Heart right ventricle (tissue), 16 donors: ENCODE measurements at regions of chr3 and their contacts with region 1.

Region 1: GRCh38 chr3:119380697-119381096 is 82.7 kb downstream of the TMEM39A start:
- DNase-seq: no peak
- ATAC-seq: peak in 3 of 8 donors; percentile 28 to 45 (median 31)
- H3K4me3 ChIP-seq: no peak overlapping the region
- H3K27ac ChIP-seq: no peak overlapping the region
- H3K4me1 ChIP-seq: peaks cover 0 to 16% (median 0%) of the 10 kb centered on the region in 9 donors
- H3K27me3 ChIP-seq: no peaks in the 10 kb centered on the region
- CTCF ChIP-seq: peak in 2 of 9 donors; percentile 11 to 22

Region 2: GRCh38 chr3:119428538-119428937 is 47.8 kb after region 1 on chr3:
- intact Hi-C with region 1: loop called in 1 of 10 experiments (anchors 1 kb)
- DNase-seq: no peak
- ATAC-seq: no peak
- H3K4me3 ChIP-seq: no peak overlapping the region
- H3K27ac ChIP-seq: no peak overlapping the region
- H3K4me1 ChIP-seq: peaks cover 0 to 13% (median 7%) of the 10 kb centered on the region in 9 donors
- H3K27me3 ChIP-seq: no peaks in the 10 kb centered on the region
- CTCF ChIP-seq: no peak

Region 3: DNA sequence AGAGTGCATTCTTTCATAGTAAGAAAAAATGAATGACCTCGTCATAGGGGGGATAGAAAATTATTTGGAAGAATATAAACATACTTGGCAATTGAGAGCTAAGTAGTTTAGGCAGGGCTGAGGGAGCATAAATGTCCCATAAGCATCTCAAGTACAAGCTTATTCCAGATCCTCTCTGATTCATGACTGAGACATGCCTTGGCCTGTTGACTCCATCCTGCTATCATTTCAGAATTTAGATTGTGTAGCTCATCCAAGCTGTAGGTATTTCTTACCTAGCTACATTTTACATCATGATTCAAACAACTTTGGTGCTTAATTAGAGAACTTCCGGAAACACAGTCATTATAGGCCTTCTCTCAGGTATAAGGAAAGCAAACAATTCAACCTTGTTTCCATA is 100.4 kb after region 1 on chr3:
- intact Hi-C with region 1: no loop called
- DNase-seq: no peak
- ATAC-seq: no peak
- H3K4me3 ChIP-seq: no peak overlapping the region
- H3K27ac ChIP-seq: no peak overlapping the region
- H3K4me1 ChIP-seq: no peaks in the 10 kb centered on the region
- H3K27me3 ChIP-seq: no peaks in the 10 kb centered on the region
- CTCF ChIP-seq: no peak